ENCODE measurements at regions of chr19 and their contacts with region 1.

Region 1: DNA sequence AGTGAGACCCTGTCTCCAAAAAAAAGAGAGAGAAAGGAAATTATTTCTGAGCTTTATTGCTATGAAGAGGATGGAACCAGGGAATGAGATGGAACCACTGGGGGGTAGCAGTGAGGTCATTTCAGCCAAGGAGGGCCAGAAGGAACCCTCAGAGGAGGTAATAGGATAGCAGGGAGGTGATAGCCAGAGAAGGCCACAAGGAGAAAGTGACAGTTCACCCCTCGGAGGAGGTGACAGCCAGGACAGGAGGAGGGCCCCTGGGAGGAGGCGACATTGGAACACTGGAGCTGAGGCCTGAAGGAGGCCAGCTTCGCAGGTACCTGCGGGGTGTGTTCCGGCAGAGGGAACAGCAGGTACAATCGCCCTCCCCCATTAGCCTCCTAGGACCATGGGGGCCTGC is 675 bp upstream of the PGPEP1 start:
- DNase-seq: peak; percentile 33
- H3K4me3 ChIP-seq: no peak overlapping the region
- H3K27ac ChIP-seq: no peak overlapping the region
- H3K4me1 ChIP-seq: no peaks in the 10 kb centered on the region
- H3K27me3 ChIP-seq: no peaks in the 10 kb centered on the region
- CTCF ChIP-seq: no peak

Region 2: DNA sequence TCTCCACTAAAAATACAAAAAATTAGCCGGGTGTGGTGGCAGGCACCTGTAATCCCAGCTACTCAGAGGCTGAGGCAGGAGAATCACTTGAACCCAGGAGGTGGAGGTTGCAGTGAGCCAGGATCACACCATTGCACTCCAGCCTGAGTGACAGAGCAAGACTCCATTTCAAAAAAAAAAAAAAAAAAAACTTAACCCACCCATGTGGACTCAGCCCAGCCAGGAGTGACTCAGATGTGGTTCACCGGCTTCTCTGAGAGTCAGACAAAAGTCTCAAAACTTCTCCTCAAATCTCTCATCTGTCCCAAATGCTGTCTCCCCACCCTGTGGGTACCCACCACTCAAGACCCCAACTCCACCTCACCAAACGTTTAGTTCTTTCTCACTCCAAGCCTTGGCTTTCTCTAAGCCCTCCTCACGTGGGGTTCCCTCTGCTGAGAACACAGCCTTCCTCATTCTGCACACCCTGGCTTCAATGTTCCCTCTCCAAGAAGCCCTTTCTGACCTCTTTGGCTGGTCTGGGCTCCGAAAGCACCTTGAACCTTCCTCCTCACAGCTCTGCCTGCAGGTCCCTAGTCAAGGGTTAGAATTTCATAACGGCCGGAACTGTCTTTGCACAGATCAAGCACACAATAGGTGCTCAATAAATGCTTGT is 124.8 kb before region 1 on chr19:
- intact Hi-C with region 1: loop called (anchors 10 kb)
- DNase-seq: no peak
- H3K4me3 ChIP-seq: no peak overlapping the region
- H3K27ac ChIP-seq: no peak overlapping the region
- H3K4me1 ChIP-seq: no peaks in the 10 kb centered on the region
- H3K27me3 ChIP-seq: no peaks in the 10 kb centered on the region
- CTCF ChIP-seq: no peak